ENCODE measurements at regions of chr20 and their contacts with region 1.

Region 1: DNA sequence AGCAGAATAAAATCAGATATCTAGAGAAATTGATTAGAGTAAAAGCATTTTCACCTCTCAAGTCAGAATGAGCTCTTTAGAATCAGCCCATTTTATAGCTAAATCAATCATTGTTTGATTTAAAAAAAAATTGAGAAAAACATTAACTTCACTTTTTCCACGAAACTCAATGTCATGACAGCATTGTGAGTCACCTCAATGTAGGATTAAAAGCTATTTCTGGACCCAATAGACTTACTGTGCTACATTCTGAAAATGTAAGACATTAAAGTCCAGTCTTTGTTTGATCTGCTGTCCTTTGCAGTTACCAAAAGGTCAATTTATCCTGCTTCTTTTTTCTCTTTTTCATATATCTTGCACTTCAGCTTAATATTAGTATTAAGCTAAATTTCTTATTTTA is 519.4 kb upstream of the ZNF337 start:
- DNase-seq: peak; percentile 37
- ATAC-seq: peak; percentile 77
- H3K4me3 ChIP-seq: no peak overlapping the region
- H3K27ac ChIP-seq: no peak overlapping the region
- H3K4me1 ChIP-seq: no peaks in the 10 kb centered on the region
- H3K27me3 ChIP-seq: no peaks in the 10 kb centered on the region
- CTCF ChIP-seq: no peak

Region 2: GRCh38 chr20:25848222-25848621 is 367.8 kb before region 1 on chr20:
- CTCF ChIA-PET with region 1: no interaction called
- POLR2A ChIA-PET with region 1: no interaction called
- intact Hi-C with region 1: no loop called
- DNase-seq: no peak
- ATAC-seq: no peak
- H3K4me3 ChIP-seq: no peak overlapping the region
- H3K27ac ChIP-seq: no peak overlapping the region
- H3K4me1 ChIP-seq: 0 out of 2 replicates have a peak, but pooled peaks cover 4% of the 10 kb centered on the region
- H3K27me3 ChIP-seq: no peaks in the 10 kb centered on the region
- CTCF ChIP-seq: no peak

Region 3: GRCh38 chr20:26135325-26136110 is 80.5 kb before region 1 on chr20:
- CTCF ChIA-PET with region 1: no interaction called
- POLR2A ChIA-PET with region 1: no interaction called
- intact Hi-C with region 1: loop called (anchors 10 kb)
- DNase-seq: no peak
- ATAC-seq: no peak
- H3K4me3 ChIP-seq: no peak overlapping the region
- H3K27ac ChIP-seq: no peak overlapping the region
- H3K4me1 ChIP-seq: no peaks in the 10 kb centered on the region
- H3K27me3 ChIP-seq: peaks cover 9% of the 10 kb centered on the region; the same call in 1 of the 2 replicates
- CTCF ChIP-seq: no peak

Region 4: DNA sequence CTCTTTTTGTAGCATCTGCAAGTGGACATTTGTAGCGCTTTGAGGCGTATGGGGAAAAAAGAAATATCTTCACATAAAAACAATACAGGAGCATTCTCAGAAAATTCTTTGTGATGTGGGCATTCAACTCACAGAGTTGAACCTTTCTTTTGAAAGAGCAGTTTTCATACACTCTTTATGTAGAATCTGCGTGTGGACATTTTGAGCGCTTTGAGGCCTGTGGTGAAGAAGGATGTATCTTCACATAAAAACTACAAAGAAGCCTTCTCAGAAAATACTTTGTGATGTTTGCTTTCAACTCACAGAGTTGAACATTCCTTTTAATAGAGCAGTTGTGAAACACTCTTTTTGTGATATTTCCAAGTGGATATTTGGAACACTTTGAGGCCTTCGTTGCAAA is 79.0 kb after region 1 on chr20:
- CTCF ChIA-PET with region 1: no interaction called
- POLR2A ChIA-PET with region 1: no interaction called
- intact Hi-C with region 1: loop called (anchors 10 kb)
- DNase-seq: no peak
- ATAC-seq: no peak
- H3K4me3 ChIP-seq: no peak overlapping the region
- H3K27ac ChIP-seq: no peak overlapping the region
- H3K4me1 ChIP-seq: no peaks in the 10 kb centered on the region
- H3K27me3 ChIP-seq: no peaks in the 10 kb centered on the region
- CTCF ChIP-seq: no peak